Right ventricle myocardium superior (tissue), 1 donor: ENCODE measurements at regions of chr4 and their contacts with region 1.

Region 1: GRCh38 chr4:15231265-15232091 is 196.4 kb upstream of the C1QTNF7 start:
- DNase-seq: peak; percentile 64
- ATAC-seq: peak; percentile 90

Region 2: GRCh38 chr4:14934704-14935390 is 296.6 kb before region 1 on chr4:
- intact Hi-C with region 1: no loop called
- DNase-seq: no peak
- ATAC-seq: no peak

Region 3: GRCh38 chr4:15457406-15458201 is 226.1 kb after region 1 on chr4:
- intact Hi-C with region 1: loop called (anchors 5 kb)
- DNase-seq: no peak
- ATAC-seq: peak; percentile 84